Colonic mucosa (tissue), 4 donors: ENCODE measurements at regions of chr16 and their contacts with region 1.

Region 1: GRCh38 chr16:27228621-27229501 is 25.5 kb downstream of the KDM8 start:
- DNase-seq: no peak
- H3K4me3 ChIP-seq: no peak overlapping the region
- H3K27ac ChIP-seq: no peak overlapping the region
- H3K4me1 ChIP-seq: peaks cover 37% of the 10 kb centered on the region
- H3K27me3 ChIP-seq: no peaks in the 10 kb centered on the region
- CTCF ChIP-seq: no peak

Region 2: DNA sequence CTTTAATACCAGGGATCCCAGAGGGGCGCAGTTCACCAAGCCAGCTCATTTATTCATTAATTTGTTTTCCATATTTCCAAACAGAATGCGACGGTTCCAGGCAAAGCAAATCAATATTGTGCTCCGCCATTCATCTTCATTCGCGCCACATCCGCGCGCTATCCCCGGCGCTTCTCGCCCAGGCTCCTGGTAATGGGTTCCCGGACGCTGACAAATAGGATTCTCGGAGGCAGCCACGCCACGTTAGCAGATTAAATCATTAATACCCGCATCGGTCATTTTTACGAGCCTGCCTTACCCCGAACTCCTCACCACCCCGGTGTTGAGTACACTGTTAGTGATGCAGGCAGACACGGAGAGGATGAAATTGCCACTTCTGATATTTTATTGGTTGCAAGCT is 188.1 kb before region 1 on chr16:
- intact Hi-C with region 1: no loop called
- DNase-seq: no peak
- H3K4me3 ChIP-seq: no peak overlapping the region
- H3K27ac ChIP-seq: no peak overlapping the region
- H3K4me1 ChIP-seq: no peaks in the 10 kb centered on the region
- H3K27me3 ChIP-seq: no peaks in the 10 kb centered on the region
- CTCF ChIP-seq: no peak

Region 3: GRCh38 chr16:27164352-27164751 is 64.5 kb before region 1 on chr16:
- intact Hi-C with region 1: no loop called
- DNase-seq: no peak
- H3K4me3 ChIP-seq: no peak overlapping the region
- H3K27ac ChIP-seq: no peak overlapping the region
- H3K4me1 ChIP-seq: no peaks in the 10 kb centered on the region
- H3K27me3 ChIP-seq: no peaks in the 10 kb centered on the region
- CTCF ChIP-seq: no peak

Region 4: DNA sequence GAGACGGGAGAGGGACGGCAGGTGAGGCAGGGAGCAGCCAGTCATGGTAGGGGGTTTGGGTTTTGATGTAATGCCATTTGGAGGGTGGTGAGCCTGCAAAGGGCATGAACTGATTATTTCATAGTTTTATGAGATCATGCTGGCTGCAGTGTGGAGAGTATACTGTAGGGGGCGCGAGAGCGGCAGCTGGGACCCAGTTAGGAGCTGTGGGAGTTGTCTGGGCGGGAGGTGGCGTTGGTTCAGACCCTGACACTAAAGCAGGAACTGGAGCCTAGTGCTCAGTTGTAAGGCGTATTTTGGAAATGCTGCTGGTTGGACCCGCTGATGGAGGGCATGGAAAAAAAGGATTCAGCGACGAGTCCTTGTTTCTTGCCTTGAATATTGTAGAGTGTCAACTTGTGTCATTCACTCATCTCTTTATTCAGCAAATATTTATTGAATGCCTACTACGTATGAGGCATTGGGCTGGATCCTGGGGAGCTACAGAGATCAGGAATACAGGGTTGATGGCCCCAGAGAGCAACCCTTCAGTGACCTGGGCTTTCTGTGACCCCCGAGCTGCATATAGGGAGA is 49.3 kb before region 1 on chr16:
- intact Hi-C with region 1: loop called (anchors 5 kb)
- DNase-seq: peak; percentile 93
- H3K4me3 ChIP-seq: no peak overlapping the region
- H3K27ac ChIP-seq: no peak overlapping the region
- H3K4me1 ChIP-seq: no peaks in the 10 kb centered on the region
- H3K27me3 ChIP-seq: no peaks in the 10 kb centered on the region
- CTCF ChIP-seq: peak; percentile 92

Region 5: GRCh38 chr16:27273670-27274423 is 45.0 kb after region 1 on chr16:
- intact Hi-C with region 1: no loop called
- DNase-seq: peak; percentile 29
- H3K4me3 ChIP-seq: no peak overlapping the region
- H3K27ac ChIP-seq: no peak overlapping the region
- H3K4me1 ChIP-seq: peaks cover 2% of the 10 kb centered on the region
- H3K27me3 ChIP-seq: no peaks in the 10 kb centered on the region
- CTCF ChIP-seq: no peak